Activated CD4-positive, alpha-beta memory T cell treated with anti-CD3 and anti-CD28 coated beads for 36 hours (primary cell): ENCODE measurements at regions of chr1 and their contacts with region 1.

Region 1: GRCh38 chr1:208007938-208008342 is 97.0 kb upstream of the CD34 start:
- DNase-seq: no peak
- H3K4me3 Mint-ChIP-seq: no peak overlapping the region
- H3K27ac Mint-ChIP-seq: no peak overlapping the region
- H3K4me1 Mint-ChIP-seq: no peaks in the 10 kb centered on the region
- H3K27me3 Mint-ChIP-seq: no peaks in the 10 kb centered on the region

Region 2: DNA sequence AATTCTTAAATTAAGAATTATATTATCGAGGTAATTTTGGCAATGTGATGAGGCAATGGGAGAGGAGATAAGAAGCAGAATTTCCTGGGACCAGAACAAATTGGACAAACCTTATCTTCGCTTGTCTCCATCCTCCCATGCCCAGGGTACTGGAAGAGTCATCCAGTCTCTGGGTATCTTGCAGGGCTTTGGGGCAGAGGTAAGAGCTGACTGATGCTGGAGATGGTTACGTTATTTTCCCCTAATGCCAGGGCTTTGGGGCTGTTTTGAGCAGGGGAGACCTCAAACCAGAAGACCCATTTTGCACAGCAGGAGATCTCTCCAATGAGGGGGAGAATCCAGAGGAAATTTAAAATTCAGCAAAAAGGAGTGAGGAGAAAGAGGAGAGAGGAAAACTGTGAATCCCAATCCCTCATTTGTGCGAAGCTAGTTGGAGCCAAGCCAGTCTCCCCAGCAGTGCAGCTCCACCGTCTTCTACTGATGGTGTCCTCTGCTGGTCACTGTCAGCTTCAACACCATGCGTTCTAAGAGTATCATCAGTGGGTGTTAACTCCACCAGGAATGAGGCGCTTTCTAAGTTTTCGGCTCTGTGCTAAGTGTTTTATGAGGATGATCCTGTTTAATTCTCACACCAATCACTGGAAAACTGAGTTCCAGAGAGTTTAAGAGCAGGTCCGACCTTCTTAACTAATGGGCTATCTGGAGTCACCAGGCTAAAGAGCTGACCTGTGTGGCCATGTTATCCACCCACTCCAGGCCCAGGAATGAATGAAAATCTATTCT is 10.3 kb before region 1 on chr1:
- CTCF ChIA-PET with region 1: interaction called, 26 read pairs
- POLR2A ChIA-PET with region 1: no interaction called
- intact Hi-C with region 1: no loop called
- DNase-seq: peak; percentile 62
- H3K4me3 Mint-ChIP-seq: no peak overlapping the region
- H3K27ac Mint-ChIP-seq: no peak overlapping the region
- H3K4me1 Mint-ChIP-seq: no peaks in the 10 kb centered on the region
- H3K27me3 Mint-ChIP-seq: peaks cover 8% of the 10 kb centered on the region

Region 3: DNA sequence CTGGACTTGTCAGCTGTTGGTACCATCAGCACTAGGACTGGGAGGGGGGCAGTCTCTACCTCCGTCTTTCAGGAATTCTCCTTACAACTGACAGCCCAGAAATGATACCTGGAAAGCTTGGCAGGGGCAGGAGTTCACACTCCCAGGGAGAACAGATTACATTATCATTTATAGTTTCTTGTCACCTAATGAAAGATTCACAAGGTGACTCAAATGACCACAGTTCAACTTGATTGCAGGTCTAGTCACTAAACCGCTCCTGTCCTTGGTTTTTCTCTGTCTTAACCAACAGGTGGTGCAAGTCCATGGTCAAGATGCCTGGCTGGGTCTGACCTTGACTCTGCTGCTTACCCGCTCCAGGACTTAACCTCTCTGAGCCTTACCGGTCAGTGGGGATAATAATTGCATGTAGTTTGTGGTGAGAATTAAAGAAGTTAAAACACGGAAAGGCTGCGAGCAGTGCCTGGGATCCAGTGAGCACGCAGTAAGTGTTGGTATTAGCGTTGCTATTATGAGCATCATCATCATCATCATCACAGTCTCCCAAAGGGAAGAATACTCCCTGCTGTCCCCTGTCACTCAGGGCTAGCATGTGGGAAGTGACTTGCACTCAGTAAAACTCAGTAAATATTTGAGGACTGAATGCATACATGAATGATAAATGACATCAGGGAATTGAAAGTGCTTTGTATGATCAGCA is 28.3 kb after region 1 on chr1:
- CTCF ChIA-PET with region 1: no interaction called
- POLR2A ChIA-PET with region 1: no interaction called
- intact Hi-C with region 1: no loop called
- DNase-seq: no peak
- H3K4me3 Mint-ChIP-seq: no peak overlapping the region
- H3K27ac Mint-ChIP-seq: no peak overlapping the region
- H3K4me1 Mint-ChIP-seq: no peaks in the 10 kb centered on the region
- H3K27me3 Mint-ChIP-seq: no peaks in the 10 kb centered on the region

Region 4: DNA sequence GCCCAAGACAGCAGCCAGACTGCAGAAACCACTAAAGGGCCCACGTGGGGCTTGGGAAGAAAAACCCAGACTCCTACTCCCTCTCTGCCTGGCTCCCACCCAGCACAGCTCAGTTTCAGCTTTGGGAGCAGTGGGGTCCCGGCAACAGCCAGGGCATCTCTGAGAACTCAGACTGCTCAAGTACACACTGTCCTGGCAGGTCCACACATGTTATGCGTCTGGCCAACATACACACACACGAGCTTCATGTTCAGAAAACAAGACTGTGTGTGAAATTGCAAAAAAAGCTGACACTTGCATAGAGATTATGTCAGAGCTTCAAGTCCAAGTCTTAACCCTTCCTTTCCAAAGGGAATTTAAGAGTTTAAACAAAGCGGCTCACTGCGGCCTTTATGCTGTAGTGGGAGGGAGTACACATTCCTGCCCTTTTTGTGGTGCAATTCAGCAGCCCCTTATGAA is 39.6 kb after region 1 on chr1:
- CTCF ChIA-PET with region 1: no interaction called
- POLR2A ChIA-PET with region 1: no interaction called
- intact Hi-C with region 1: no loop called
- DNase-seq: no peak
- H3K4me3 Mint-ChIP-seq: no peak overlapping the region
- H3K27ac Mint-ChIP-seq: no peak overlapping the region
- H3K4me1 Mint-ChIP-seq: peaks cover 3% of the 10 kb centered on the region
- H3K27me3 Mint-ChIP-seq: no peaks in the 10 kb centered on the region